ENCODE measurements at regions of chr7 and their contacts with region 1.

Region 1: GRCh38 chr7:47991741-47992311 is 12.4 kb upstream of the HUS1 start:
- DNase-seq: peak; percentile 89
- H3K4me3 ChIP-seq: peak overlapping the region; percentile 22 to 61 (median 42)
- H3K27ac ChIP-seq: peak overlapping the region; percentile 71 to 82 (median 76)
- H3K4me1 ChIP-seq: peaks cover 0 to 11% (median 5%) of the 10 kb centered on the region in 4 donors
- H3K27me3 ChIP-seq: no peaks in the 10 kb centered on the region
- CTCF ChIP-seq: peak; percentile 44 to 64 (median 54)
- EP300 ChIP-seq: no peak
- POLR2A ChIP-seq: peak; percentile 33

Region 2: GRCh38 chr7:47783456-47784223 is 208.2 kb before region 1 on chr7:
- in situ Hi-C with region 1: no loop called
- intact Hi-C with region 1: no loop called
- DNase-seq: no peak
- H3K4me3 ChIP-seq: no peak overlapping the region
- H3K27ac ChIP-seq: peak overlapping the region; percentile 67 to 84 (median 76)
- H3K4me1 ChIP-seq: peaks cover 0 to 32% (median 4%) of the 10 kb centered on the region in 4 donors
- H3K27me3 ChIP-seq: no peaks in the 10 kb centered on the region
- CTCF ChIP-seq: no peak
- EP300 ChIP-seq: peak; percentile 78
- POLR2A ChIP-seq: no peak

Region 3: DNA sequence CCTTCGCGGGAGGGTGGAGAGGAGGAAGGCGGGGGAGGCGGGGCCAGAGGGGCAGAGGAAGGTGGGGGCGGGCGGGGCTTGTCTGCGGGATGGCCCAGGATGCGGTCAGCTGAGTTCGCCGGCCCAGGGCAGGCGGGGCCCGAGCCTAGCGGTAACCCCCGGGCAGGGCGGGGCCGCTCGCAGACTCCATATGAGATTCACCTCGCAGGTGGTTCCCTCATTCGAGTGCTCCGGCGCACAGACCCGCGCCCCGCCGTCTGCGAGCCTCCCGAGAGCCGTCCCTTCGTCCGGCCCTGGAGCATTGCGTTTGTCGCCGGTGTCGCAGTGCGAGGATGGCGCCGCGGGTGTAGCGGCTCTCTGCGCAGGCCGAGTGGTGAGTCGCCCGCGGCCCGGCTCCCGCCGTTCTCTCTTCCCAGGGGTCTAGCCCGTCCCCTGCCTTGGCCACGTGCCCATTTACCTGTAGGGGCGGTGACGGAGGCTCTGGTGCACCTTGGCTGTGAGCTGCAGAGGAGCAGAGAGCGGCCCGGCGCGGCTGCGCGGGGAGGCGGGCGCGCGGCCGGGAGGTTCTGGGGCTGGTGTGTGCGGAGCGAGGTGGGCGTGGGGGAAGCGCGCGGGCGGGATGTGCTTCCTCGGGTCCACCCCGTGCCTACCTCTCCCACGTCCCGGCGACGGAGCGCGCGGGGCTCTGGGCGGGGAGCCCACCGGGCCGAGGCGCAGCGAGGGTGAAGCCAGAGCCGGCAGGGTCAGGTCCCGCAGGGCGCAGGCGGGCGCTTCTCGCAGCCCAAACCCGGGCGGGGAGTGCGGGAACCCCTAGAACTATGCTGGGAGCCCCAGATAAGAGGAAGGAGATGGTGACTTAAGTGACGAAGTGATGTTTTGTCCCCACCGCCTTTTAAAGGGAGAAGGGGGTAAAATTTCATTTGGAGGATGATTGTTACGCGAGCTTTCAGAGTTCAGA is 97.5 kb after region 1 on chr7 and contains the start of gene UPP1:
- in situ Hi-C with region 1: loop called in 1 of 4 experiments (anchors 5 kb)
- intact Hi-C with region 1: no loop called
- DNase-seq: peak; percentile 97
- H3K4me3 ChIP-seq: peak within 1 kb of the TSS; percentile 69 to 85 (median 83)
- H3K27ac ChIP-seq: peak within 1 kb of the TSS; percentile 94 to 97 (median 95)
- H3K4me1 ChIP-seq: peaks cover 7 to 51% (median 24%) of the 10 kb centered on the region in 4 donors
- H3K27me3 ChIP-seq: no peaks in the 10 kb centered on the region
- CTCF ChIP-seq: no peak
- EP300 ChIP-seq: no peak
- POLR2A ChIP-seq: peak; percentile 88
- total RNA-seq, gene UPP1: 31.3 to 46.8 (median 39.3) TPM

Region 4: GRCh38 chr7:48109848-48110663 is 118.2 kb after region 1 on chr7:
- in situ Hi-C with region 1: loop called in 3 of 4 experiments (anchors 5 to 10 kb)
- intact Hi-C with region 1: loop called (anchors 5 kb)
- DNase-seq: peak; percentile 91
- H3K4me3 ChIP-seq: no peak overlapping the region
- H3K27ac ChIP-seq: no peak overlapping the region
- H3K4me1 ChIP-seq: no peaks in the 10 kb centered on the region
- H3K27me3 ChIP-seq: no peaks in the 10 kb centered on the region
- CTCF ChIP-seq: peak; percentile 98 to 100 (median 99)
- EP300 ChIP-seq: no peak
- POLR2A ChIP-seq: no peak

Region 5: GRCh38 chr7:49670991-49671390 is 1679.2 kb after region 1 on chr7:
- in situ Hi-C with region 1: no loop called
- intact Hi-C with region 1: no loop called
- DNase-seq: no peak
- H3K4me3 ChIP-seq: no peak overlapping the region
- H3K27ac ChIP-seq: no peak overlapping the region
- H3K4me1 ChIP-seq: no peaks in the 10 kb centered on the region
- H3K27me3 ChIP-seq: no peaks in the 10 kb centered on the region
- CTCF ChIP-seq: no peak
- EP300 ChIP-seq: no peak
- POLR2A ChIP-seq: no peak

Measured in transverse colon (tissue), 4 donors.